ENCODE measurements at regions of chr2 and their contacts with region 1.

Region 1: GRCh38 chr2:47344890-47345589 is 57.9 kb upstream of the MSH2 start:
- DNase-seq: no peak
- H3K4me3 ChIP-seq: no peak overlapping the region
- H3K27ac ChIP-seq: no peak overlapping the region
- H3K4me1 ChIP-seq: no peaks in the 10 kb centered on the region
- CTCF ChIP-seq: no peak

Region 2: GRCh38 chr2:47173986-47174732 is 170.9 kb before region 1 on chr2:
- CTCF ChIA-PET with region 1: no interaction called
- POLR2A ChIA-PET with region 1: no interaction called
- intact Hi-C with region 1: no loop called
- DNase-seq: no peak
- H3K4me3 ChIP-seq: peak overlapping the region; percentile 98
- H3K27ac ChIP-seq: peak overlapping the region; percentile 3
- H3K4me1 ChIP-seq: peaks cover 64% of the 10 kb centered on the region
- CTCF ChIP-seq: no peak

Region 3: GRCh38 chr2:47327295-47327694 is 17.7 kb before region 1 on chr2:
- CTCF ChIA-PET with region 1: no interaction called
- POLR2A ChIA-PET with region 1: no interaction called
- intact Hi-C with region 1: no loop called
- DNase-seq: no peak
- H3K4me3 ChIP-seq: no peak overlapping the region
- H3K27ac ChIP-seq: no peak overlapping the region
- H3K4me1 ChIP-seq: no peaks in the 10 kb centered on the region
- CTCF ChIP-seq: no peak

Region 4: DNA sequence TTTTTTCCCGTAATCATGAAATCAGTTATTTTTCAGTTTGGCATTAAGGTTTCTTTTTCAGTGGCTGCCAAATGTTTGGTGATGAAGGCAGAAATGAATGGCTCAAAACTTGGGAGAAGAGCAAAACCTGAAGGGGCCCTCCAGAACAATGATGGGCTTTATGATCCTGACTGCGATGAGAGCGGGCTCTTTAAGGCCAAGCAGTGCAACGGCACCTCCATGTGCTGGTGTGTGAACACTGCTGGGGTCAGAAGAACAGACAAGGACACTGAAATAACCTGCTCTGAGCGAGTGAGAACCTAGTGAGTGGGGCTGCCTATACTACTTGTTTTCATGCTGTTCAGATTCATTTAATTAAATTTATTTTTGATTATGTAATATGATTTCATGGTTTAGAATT is 28.7 kb after region 1 on chr2:
- CTCF ChIA-PET with region 1: no interaction called
- POLR2A ChIA-PET with region 1: interaction called, 11 read pairs
- intact Hi-C with region 1: no loop called
- DNase-seq: peak; percentile 27
- H3K4me3 ChIP-seq: no peak overlapping the region
- H3K27ac ChIP-seq: no peak overlapping the region
- H3K4me1 ChIP-seq: no peaks in the 10 kb centered on the region
- CTCF ChIP-seq: peak; percentile 33; the same call in 1 of the 2 replicates

Measured in OCI-LY7 (cell line).